CD8-positive, alpha-beta T cell (primary cell): ENCODE measurements at regions of chr14 and their contacts with region 1.

Region 1: GRCh38 chr14:73851644-73852382 is at the start of gene PTGR2:
- DNase-seq: peak; percentile 77 to 97 (median 89)
- ATAC-seq: peak; percentile 93
- H3K4me3 ChIP-seq: peak within 1 kb of the TSS; percentile 47 to 63
- H3K4me3 Mint-ChIP-seq: peak within 1 kb of the TSS; percentile 90
- H3K27ac ChIP-seq: peak within 1 kb of the TSS; percentile 70 to 81
- H3K27ac Mint-ChIP-seq: peak within 1 kb of the TSS; percentile 98
- H3K4me1 ChIP-seq: peaks cover 6% of the 10 kb centered on the region
- H3K4me1 Mint-ChIP-seq: peaks cover 21% of the 10 kb centered on the region
- H3K27me3 ChIP-seq: no peaks in the 10 kb centered on the region
- H3K27me3 Mint-ChIP-seq: no peaks in the 10 kb centered on the region
- CTCF ChIP-seq: no peak
- total RNA-seq, gene PTGR2: 1.2 to 1.4 TPM

Region 2: GRCh38 chr14:73713803-73714655 is 137.8 kb before region 1 on chr14 and contains the start of gene PNMA1:
- CTCF ChIA-PET with region 1: interaction called, 4 read pairs
- POLR2A ChIA-PET with region 1: interaction called, 8 read pairs
- intact Hi-C with region 1: loop called in 1 of 2 experiments (anchors 1 kb)
- DNase-seq: peak; percentile 67 to 94 (median 87)
- ATAC-seq: peak; percentile 72
- H3K4me3 ChIP-seq: peak within 1 kb of the TSS; percentile 71 to 92
- H3K4me3 Mint-ChIP-seq: peak within 1 kb of the TSS; percentile 92
- H3K27ac ChIP-seq: peak within 1 kb of the TSS; percentile 76 to 77
- H3K27ac Mint-ChIP-seq: peak within 1 kb of the TSS; percentile 96
- H3K4me1 ChIP-seq: peaks cover 10% of the 10 kb centered on the region
- H3K4me1 Mint-ChIP-seq: peaks cover 34% of the 10 kb centered on the region
- H3K27me3 ChIP-seq: no peaks in the 10 kb centered on the region
- H3K27me3 Mint-ChIP-seq: no peaks in the 10 kb centered on the region
- CTCF ChIP-seq: no peak
- total RNA-seq, gene PNMA1: 39.4 to 39.8 TPM

Region 3: DNA sequence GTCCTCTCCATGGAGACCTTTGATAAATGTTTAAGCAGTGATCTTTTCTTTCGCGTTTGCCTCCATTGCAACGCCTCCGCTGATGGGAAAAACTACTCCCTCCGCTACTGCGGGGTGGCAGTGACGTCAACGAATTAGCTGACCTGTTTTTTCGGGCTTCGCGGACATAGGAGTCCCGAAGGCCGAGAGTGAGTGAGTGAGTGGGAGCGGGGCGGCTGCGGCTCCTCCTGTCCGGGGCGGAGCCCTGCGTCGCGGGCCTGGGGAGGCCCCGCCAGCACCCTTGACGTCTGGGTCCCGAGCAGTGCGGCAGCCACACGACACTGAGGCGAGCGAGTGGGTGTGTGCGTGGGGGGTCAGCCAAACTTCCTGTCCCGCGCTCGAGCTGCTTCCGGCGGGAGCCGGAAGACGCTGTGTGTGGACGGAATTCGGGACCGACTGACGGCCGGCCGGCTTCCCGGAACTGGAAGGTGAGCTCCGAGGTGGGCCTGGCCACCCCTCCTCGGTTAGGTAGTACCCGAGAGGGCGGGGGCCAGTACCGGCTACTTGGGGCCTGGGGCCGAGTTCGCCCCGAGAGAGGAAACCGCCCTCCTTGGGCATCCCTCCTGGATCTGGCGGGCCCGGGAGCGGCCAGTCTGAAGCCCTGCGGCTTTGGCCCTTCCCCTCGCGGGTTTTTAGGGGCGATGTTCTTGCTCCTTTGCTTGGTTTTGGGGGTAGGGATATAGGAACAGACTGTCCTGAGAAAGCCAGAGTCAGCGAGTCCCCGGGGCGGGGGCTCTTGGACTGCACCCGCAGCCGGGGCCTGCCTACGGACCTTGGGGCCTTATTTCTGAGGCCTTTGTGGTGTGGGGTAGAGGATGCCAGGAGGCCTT is 34.9 kb after region 1 on chr14 and contains the start of gene ZNF410:
- CTCF ChIA-PET with region 1: interaction called, 3 read pairs
- POLR2A ChIA-PET with region 1: interaction called, 4 read pairs
- intact Hi-C with region 1: loop called (anchors 1 kb)
- DNase-seq: peak; percentile 70 to 95 (median 85)
- ATAC-seq: peak; percentile 98
- H3K4me3 ChIP-seq: peak within 1 kb of the TSS; percentile 90
- H3K4me3 Mint-ChIP-seq: peak within 1 kb of the TSS; percentile 98
- H3K27ac ChIP-seq: peak within 1 kb of the TSS; percentile 91 to 99
- H3K27ac Mint-ChIP-seq: peak within 1 kb of the TSS; percentile 99
- H3K4me1 ChIP-seq: peaks cover 19% of the 10 kb centered on the region
- H3K4me1 Mint-ChIP-seq: peaks cover 46% of the 10 kb centered on the region
- H3K27me3 ChIP-seq: no peaks in the 10 kb centered on the region
- H3K27me3 Mint-ChIP-seq: no peaks in the 10 kb centered on the region
- CTCF ChIP-seq: no peak
- total RNA-seq, gene ZNF410: 86.6 to 89.2 TPM

Region 4: GRCh38 chr14:74302634-74303577 is 451.1 kb after region 1 on chr14 and contains the start of gene ABCD4:
- CTCF ChIA-PET with region 1: no interaction called
- POLR2A ChIA-PET with region 1: no interaction called
- intact Hi-C with region 1: loop called in 1 of 2 experiments (anchors 5 kb)
- DNase-seq: peak; percentile 69 to 90 (median 86)
- ATAC-seq: peak; percentile 87
- H3K4me3 ChIP-seq: peak within 1 kb of the TSS; percentile 69 to 85
- H3K4me3 Mint-ChIP-seq: peak within 1 kb of the TSS; percentile 100
- H3K27ac ChIP-seq: peak within 1 kb of the TSS; percentile 78 to 85
- H3K27ac Mint-ChIP-seq: peak within 1 kb of the TSS; percentile 98
- H3K4me1 ChIP-seq: peaks cover 19% of the 10 kb centered on the region
- H3K4me1 Mint-ChIP-seq: peaks cover 28% of the 10 kb centered on the region
- H3K27me3 ChIP-seq: no peaks in the 10 kb centered on the region
- H3K27me3 Mint-ChIP-seq: no peaks in the 10 kb centered on the region
- CTCF ChIP-seq: peak; percentile 18
- total RNA-seq, gene ABCD4: 67.5 to 76.9 TPM